Breast epithelium (tissue), 4 donors: ENCODE measurements at regions of chr20 and their contacts with region 1.

Region 1: DNA sequence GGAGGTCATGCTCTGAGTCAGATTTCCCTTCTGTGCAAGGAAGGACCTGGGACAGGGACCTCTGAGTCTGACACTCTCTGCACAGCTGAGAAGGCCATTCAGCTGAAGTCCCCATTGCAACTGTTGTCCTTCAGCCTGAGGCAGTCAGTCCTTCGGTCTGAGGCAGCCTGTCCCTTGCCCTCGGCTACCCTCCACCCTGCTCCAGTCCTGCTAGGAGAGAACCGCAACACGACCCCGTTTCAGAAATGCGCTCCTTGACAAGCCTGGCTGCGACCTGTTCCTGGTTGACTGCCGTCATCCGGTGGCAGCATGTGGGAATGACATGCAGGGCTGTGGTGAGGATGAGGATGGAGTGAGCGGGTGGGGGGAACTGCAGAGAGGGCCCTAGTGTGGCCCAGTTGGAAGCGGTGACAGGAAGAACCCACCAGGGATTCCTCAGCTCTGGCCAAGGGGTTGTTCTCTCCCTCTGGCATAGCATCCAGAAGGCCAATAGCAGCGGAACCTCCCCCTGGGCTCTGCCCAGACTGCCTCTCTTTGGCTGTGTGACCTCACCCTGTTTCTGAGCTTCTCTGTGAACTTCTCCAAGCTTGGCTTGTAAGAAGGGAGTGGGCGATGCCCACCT is 40.3 kb upstream of the ANGPT4 start:
- DNase-seq: peak; percentile 43 to 66
- H3K4me3 ChIP-seq: no peak overlapping the region
- H3K27ac ChIP-seq: no peak overlapping the region
- H3K4me1 ChIP-seq: no peaks in the 10 kb centered on the region
- H3K27me3 ChIP-seq: peaks cover 0 to 17% of the 10 kb centered on the region in 2 donors
- CTCF ChIP-seq: peak; percentile 81 to 98 (median 94)
- POLR2A ChIP-seq: no peak

Region 2: DNA sequence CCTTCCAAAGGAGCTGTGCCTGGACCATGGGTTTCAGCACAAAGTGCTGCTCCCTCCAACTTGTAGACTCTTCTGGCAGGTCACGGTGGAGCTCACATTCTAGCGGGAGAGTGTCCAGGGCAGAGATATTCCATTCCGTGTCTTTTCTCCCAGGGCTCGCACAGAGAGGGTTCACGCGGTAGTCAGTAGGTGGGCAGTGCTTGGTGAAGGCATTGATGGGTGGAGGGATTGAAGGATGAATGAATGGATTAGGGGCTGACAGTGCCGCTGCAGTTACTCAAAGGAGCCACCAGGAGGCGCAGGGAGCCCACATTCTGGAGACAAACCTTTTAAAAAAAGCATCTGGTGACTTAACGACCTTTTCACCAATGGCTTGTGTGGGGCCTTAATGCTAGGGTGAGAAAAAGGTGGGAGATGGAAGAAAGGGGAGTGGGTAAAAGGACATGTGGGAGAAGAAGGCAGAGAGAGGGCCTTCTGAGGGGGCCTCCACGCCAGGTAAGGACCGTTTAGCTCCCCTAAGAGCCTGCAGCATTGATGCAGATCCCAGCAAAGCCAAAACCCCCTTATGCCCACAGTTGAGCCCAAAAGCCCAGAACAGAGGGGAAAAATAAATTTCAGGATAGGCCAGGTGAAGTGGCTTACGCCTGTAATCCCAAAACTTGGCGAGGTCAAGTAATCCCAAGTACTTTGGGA is 140.4 kb before region 1 on chr20:
- intact Hi-C with region 1: loop called (anchors 5 kb)
- DNase-seq: peak in 1 of 2 donors; percentile 40
- H3K4me3 ChIP-seq: no peak overlapping the region
- H3K27ac ChIP-seq: no peak overlapping the region
- H3K4me1 ChIP-seq: no peaks in the 10 kb centered on the region
- H3K27me3 ChIP-seq: peaks cover 0 to 1% of the 10 kb centered on the region in 2 donors
- CTCF ChIP-seq: peak; percentile 91 to 99 (median 96)
- POLR2A ChIP-seq: no peak

Region 3: DNA sequence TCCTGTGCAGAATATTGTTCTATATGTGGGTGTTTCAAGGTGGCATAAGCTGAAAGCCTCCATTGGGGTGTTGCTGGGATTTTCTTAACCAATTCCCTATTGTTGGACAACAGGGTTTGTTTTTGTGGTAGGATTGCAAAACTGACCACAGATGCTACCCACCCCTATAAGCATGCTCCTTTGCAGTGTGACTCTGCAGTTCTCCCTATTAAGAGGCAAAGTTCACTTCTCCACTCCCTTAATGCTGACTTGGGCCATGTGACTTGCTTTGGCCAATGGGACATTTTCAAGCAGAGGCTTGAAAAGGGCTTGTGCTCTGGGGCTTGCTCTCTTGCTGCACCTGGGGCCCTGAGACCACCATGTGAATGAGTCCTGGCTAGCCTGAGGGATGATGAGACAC is 31.8 kb before region 1 on chr20:
- intact Hi-C with region 1: loop called (anchors 1 kb)
- DNase-seq: no peak
- H3K4me3 ChIP-seq: no peak overlapping the region
- H3K27ac ChIP-seq: no peak overlapping the region
- H3K4me1 ChIP-seq: no peaks in the 10 kb centered on the region
- H3K27me3 ChIP-seq: no peaks in the 10 kb centered on the region
- CTCF ChIP-seq: no peak
- POLR2A ChIP-seq: no peak

Region 4: GRCh38 chr20:1112908-1113307 is 156.5 kb after region 1 on chr20:
- intact Hi-C with region 1: loop called (anchors 5 kb)
- DNase-seq: no peak
- H3K4me3 ChIP-seq: no peak overlapping the region
- H3K27ac ChIP-seq: no peak overlapping the region
- H3K4me1 ChIP-seq: peaks cover 0 to 4% of the 10 kb centered on the region in 2 donors
- H3K27me3 ChIP-seq: no peaks in the 10 kb centered on the region
- CTCF ChIP-seq: no peak
- POLR2A ChIP-seq: no peak